Esophagus muscularis mucosa (tissue), 4 donors: ENCODE measurements at regions of chr15 and their contacts with region 1.

Region 1: GRCh38 chr15:39887832-39888231 is 32.2 kb downstream of the GPR176 start:
- DNase-seq: no peak
- H3K4me3 ChIP-seq: no peak overlapping the region
- H3K27ac ChIP-seq: no peak overlapping the region
- H3K4me1 ChIP-seq: no peaks in the 10 kb centered on the region
- H3K27me3 ChIP-seq: no peaks in the 10 kb centered on the region
- CTCF ChIP-seq: peak; percentile 39 to 53 (median 47)
- EP300 ChIP-seq: no peak
- POLR2A ChIP-seq: no peak

Region 2: DNA sequence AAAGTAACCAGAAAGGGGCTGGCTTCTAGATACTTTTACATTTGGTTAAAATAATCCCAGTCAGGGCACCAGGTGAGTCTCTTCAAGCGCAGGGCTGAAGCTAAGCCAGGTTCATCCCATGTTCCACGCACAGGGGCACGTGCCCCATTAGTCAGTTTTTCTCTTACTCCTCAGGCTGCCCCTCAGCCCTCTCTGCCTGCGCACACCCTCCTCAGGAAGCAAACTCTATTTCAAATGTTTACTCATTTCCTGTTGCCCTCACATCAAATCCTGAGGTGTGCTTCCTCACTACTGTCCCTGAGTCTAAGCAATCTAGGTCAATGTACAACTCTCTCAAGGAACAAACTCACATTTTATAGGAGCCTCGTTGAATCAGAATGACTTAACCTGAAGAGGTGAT is 258.5 kb before region 1 on chr15:
- intact Hi-C with region 1: no loop called
- DNase-seq: no peak
- H3K4me3 ChIP-seq: no peak overlapping the region
- H3K27ac ChIP-seq: peak overlapping the region in 2 of 4 donors; percentile 2 to 14
- H3K4me1 ChIP-seq: peaks cover 34 to 49% (median 40%) of the 10 kb centered on the region in 4 donors
- H3K27me3 ChIP-seq: no peaks in the 10 kb centered on the region
- CTCF ChIP-seq: no peak
- EP300 ChIP-seq: no peak
- POLR2A ChIP-seq: no peak

Region 3: DNA sequence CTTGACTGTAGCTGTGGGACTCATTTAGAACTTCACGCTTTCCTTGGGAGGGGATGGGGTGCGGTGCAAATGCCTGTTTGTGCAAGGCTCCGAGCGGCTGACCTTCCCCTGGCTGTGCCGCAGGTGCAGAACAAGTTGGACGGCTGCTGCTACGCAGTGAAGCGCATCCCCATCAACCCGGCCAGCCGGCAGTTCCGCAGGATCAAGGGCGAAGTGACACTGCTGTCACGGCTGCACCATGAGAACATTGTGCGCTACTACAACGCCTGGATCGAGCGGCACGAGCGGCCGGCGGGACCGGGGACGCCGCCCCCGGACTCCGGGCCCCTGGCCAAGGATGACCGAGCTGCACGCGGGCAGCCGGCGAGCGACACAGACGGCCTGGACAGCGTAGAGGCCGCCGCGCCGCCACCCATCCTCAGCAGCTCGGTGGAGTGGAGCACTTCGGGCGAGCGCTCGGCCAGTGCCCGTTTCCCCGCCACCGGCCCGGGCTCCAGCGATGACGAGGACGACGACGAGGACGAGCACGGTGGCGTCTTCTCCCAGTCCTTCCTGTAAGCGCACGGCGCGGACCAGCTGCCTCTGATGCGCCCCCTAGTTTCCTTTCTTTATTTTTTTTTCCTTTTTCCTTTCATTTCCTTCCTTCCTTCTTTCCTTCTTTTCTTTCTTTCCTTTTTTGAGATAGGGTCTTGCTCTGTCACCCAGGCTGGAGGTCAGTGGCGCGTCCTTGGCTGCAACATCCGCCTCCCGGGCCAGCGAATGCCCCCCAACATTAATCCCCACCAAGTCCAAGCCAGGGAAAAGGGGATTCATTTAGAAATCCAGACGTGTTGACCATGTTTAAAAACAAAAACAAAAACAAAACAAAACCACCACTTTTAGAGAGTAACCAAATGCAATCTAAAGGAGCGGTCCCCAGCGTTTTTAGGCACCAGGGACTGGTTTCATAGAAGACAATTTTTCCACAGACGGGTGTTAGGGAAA is 88.8 kb after region 1 on chr15:
- intact Hi-C with region 1: loop called (anchors 5 kb)
- DNase-seq: no peak
- H3K4me3 ChIP-seq: peak overlapping the region; percentile 61 to 70 (median 65)
- H3K27ac ChIP-seq: peak overlapping the region; percentile 73 to 84 (median 80)
- H3K4me1 ChIP-seq: peaks cover 4 to 13% (median 9%) of the 10 kb centered on the region in 4 donors
- H3K27me3 ChIP-seq: no peaks in the 10 kb centered on the region
- CTCF ChIP-seq: peak; percentile 49 to 72 (median 54)
- EP300 ChIP-seq: no peak
- POLR2A ChIP-seq: no peak